ENCODE measurements at regions of chr11 and their contacts with region 1.

Region 1: GRCh38 chr11:67983951-67984350 is 19.9 kb downstream of the UNC93B1 start:
- DNase-seq: peak; percentile 1
- ATAC-seq: no peak
- H3K4me3 Mint-ChIP-seq: no peak overlapping the region
- H3K27ac Mint-ChIP-seq: no peak overlapping the region
- H3K4me1 Mint-ChIP-seq: no peaks in the 10 kb centered on the region
- H3K27me3 Mint-ChIP-seq: peaks cover 3% of the 10 kb centered on the region
- CTCF ChIP-seq: no peak

Region 2: GRCh38 chr11:66136752-66137123 is 1847.2 kb before region 1 on chr11:
- CTCF ChIA-PET with region 1: no interaction called
- POLR2A ChIA-PET with region 1: no interaction called
- intact Hi-C with region 1: no loop called
- DNase-seq: no peak
- ATAC-seq: no peak
- H3K4me3 Mint-ChIP-seq: no peak overlapping the region
- H3K27ac Mint-ChIP-seq: peak overlapping the region; percentile 47
- H3K4me1 Mint-ChIP-seq: peaks cover 84% of the 10 kb centered on the region
- H3K27me3 Mint-ChIP-seq: no peaks in the 10 kb centered on the region
- CTCF ChIP-seq: no peak

Region 3: DNA sequence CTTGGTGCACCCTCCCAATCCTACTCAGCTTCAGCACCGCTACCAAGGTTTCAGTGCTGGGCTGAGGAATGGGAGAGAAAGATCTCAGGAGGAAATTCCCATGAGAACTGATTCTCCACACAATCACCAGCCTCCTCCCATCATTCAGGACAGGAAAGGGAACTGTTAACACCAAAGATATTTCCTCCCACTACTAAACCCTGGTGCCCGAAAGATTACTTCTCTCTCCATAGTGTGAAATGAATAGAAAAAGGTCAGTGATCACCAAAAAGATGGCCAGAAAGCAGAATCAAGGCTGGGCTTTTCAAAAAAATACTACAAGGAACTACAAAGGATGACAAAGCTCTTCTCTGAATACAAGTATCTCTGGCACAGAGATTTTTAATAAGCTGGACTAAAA is 81.0 kb after region 1 on chr11:
- CTCF ChIA-PET with region 1: no interaction called
- POLR2A ChIA-PET with region 1: interaction called, 10 read pairs
- intact Hi-C with region 1: no loop called
- DNase-seq: no peak
- ATAC-seq: no peak
- H3K4me3 Mint-ChIP-seq: no peak overlapping the region
- H3K27ac Mint-ChIP-seq: no peak overlapping the region
- H3K4me1 Mint-ChIP-seq: no peaks in the 10 kb centered on the region
- H3K27me3 Mint-ChIP-seq: no peaks in the 10 kb centered on the region
- CTCF ChIP-seq: no peak

Region 4: DNA sequence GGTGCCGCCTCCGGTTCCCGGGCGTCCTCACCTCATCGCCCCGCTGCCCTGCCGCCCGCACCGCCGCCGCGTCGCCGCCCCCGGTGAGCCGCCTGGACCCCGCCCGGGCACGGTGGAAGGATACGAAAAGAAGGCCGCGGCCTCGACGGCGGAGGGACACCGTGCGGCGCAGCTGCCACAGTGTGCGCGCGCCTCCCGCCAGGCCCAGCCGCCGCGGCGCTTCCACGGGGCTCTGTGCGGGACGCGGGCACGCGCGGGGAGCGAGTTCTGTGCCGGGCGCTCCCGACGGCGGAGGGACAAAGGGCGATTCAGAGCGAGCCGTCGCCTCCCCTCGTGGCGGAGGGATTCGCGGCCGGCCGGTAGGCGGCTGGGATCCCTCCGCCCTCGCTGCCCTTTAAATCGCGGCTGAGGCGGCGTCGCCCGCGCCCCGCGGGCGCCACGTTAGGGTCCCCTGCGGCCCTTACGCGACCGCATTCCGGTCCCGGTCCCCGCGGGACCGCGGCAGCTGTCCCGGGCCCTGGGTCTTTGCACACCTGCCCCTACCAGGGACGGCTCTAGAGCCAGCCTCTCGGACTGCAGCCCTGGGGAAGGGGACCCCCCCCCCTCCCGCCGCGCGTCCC is 229.7 kb after region 1 on chr11:
- CTCF ChIA-PET with region 1: no interaction called
- POLR2A ChIA-PET with region 1: no interaction called
- intact Hi-C with region 1: no loop called
- DNase-seq: peak; percentile 85
- ATAC-seq: peak; percentile 46
- H3K4me3 Mint-ChIP-seq: peak overlapping the region; percentile 83
- H3K27ac Mint-ChIP-seq: peak overlapping the region; percentile 79
- H3K4me1 Mint-ChIP-seq: peaks cover 51% of the 10 kb centered on the region
- H3K27me3 Mint-ChIP-seq: no peaks in the 10 kb centered on the region
- CTCF ChIP-seq: no peak